Activated CD4-positive, alpha-beta memory T cell treated with anti-CD3 and anti-CD28 coated beads for 36 hours (primary cell): ENCODE measurements at regions of chr6 and their contacts with region 1.

Region 1: DNA sequence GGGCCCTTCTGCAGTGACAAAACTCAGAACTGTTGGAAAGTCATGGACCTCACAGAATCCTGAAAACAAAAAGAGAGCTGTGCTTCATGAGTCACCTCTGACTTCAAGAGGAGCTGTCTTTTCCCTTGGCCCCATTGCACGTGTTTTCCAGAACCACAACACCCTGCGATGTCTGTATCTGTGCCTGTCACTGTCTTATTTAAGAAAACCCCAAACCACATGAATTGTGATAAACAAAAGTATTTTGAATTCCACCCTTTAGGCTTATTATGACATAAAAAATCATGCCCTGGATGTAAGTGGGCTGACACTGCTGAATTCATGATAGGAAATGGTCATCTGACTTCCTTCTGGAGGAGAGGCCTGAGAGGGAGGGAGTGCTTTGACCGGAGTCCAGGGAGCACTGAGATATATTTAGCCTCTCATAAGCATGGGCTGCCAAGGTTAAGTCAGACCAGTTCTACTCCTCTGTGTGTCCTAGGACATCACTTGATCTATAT is 96.4 kb upstream of the DUSP22 start:
- DNase-seq: peak; percentile 84
- H3K4me3 Mint-ChIP-seq: no peak overlapping the region
- H3K27ac Mint-ChIP-seq: peak overlapping the region; percentile 49
- H3K4me1 Mint-ChIP-seq: peaks cover 47% of the 10 kb centered on the region
- H3K27me3 Mint-ChIP-seq: peaks cover 3% of the 10 kb centered on the region

Region 2: DNA sequence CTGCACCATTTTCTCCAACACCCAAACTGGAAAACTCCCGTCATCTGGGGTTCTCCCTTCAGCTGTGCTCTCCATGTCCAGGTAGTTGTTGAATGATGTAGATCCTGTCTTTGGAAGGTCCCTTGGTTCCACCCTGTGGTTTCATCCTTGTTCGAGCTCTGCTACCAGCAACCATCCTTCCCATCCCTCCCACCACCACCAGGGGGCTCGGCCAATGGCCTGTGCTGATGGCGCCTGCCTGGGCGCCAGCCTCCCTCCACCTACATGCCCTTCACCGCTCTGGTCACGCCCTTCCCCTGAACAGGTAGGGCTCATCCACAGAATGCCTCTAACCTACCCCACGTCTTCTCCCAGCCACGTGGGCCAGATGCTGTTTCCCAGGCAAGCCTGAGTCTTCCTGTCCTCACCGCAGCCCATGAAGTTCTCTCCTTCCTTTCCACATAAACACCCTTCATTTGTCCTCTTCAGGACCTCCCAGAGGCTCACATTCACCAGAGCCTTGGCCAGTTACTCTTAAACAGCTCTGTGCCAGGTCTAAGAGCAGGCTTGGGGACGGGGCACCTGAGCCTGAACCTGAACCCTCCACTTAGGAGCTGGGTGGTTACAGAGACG is 21.2 kb after region 1 on chr6:
- CTCF ChIA-PET with region 1: interaction called, 10 read pairs
- POLR2A ChIA-PET with region 1: interaction called, 24 read pairs
- intact Hi-C with region 1: loop called (anchors 1 kb)
- DNase-seq: peak; percentile 52
- H3K4me3 Mint-ChIP-seq: no peak overlapping the region
- H3K27ac Mint-ChIP-seq: no peak overlapping the region
- H3K4me1 Mint-ChIP-seq: peaks cover 45% of the 10 kb centered on the region
- H3K27me3 Mint-ChIP-seq: peaks cover 18% of the 10 kb centered on the region